Activated T-helper 1 cell treated with anti-CD3 and anti-CD28 coated beads, Interleukin-12 subunit alpha, Interleukin-12 subunit beta, Interleukin-2, Interleukin-4 antibody, amounts not matched to agents 30 ng/mL and 10 ng/mL and 1 ng/mL, durations not matched to agents 14 hours and 24 hours and 36 hours (primary cell): ENCODE measurements at regions of chr15 and their contacts with region 1.

Region 1: DNA sequence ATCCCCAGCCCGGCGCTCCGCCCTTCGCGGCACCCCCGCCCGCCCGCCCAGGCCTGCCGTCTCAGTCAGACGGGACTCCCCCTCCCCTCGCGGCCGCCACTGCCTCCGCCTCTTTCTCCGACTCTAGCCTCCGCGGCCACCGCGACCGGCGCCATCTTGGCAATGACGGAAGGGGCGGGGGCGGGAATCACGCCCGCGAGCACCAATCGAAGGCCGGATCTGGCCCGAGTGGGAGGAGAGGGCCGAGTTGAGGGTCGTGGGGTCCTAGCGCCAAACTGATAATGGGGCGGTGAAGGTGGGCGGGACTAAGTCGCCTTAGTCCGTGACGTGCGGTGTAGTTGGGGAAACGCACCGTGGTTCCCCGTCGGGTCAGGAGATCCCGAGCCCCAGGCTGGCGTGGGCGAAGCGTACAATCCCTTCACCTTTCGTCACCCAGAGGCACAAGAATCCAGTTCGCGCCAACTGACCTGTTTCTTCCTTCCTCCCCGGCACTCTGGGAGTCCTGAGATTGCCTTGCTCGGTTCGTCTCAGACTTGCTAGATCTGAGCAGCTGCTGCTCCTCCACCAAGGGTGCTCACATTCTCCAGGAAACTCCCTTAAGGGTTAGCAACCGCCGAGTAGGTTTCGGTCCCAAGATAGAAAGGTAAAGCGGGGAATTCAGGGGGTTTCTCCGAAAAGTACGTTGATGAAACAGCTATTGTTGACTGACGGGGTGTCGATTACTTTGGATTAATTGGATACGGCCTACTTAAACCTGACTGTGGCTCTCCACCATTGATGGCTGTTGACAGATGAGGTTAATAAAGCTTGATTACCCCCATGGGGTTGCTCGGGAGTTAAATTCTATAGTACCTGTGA is at the start of gene DENND4A:
- DNase-seq: peak; percentile 99
- H3K4me3 Mint-ChIP-seq: peak within 1 kb of the TSS; percentile 91
- H3K27ac Mint-ChIP-seq: peak within 1 kb of the TSS; percentile 99
- H3K4me1 Mint-ChIP-seq: peaks cover 70% of the 10 kb centered on the region
- H3K27me3 Mint-ChIP-seq: no peaks in the 10 kb centered on the region
- total RNA-seq, gene DENND4A: 50.8 and 59.0 TPM in 2 replicates

Region 2: DNA sequence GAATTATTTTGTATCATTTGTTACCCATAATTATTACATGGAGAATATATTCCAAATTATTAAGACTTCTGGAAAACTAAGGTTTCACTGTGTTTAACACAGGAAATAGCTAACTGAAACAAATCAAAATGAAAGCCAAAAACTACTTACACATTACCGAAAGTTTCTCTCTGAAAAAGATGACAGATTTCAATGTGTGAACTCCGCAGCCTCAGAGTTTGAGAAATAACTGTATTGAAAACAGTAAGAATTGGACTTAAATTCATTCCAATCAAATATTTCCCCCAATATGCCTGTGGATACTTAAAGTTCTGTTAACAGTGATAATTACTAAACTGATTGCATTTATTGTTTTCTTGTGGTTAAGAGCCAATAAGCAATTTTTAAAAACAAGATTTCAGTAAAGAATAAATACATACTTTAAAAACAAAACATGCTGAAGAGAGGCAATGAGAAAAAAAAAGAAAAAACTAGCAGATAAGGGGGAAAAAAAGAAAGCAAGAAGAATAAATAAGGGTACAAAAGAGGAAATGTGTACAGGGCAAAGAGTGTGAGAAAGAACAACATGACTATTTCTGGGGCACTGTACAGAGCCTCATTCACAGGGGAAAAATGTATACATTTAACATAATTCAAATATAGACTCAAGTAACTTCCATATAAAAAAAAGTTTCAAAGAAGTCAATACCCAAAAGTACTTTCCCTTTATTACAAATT is 31.0 kb before region 1 on chr15:
- intact Hi-C with region 1: loop called (anchors 1 kb)
- DNase-seq: no peak
- H3K4me3 Mint-ChIP-seq: peak overlapping the region; percentile 57
- H3K27ac Mint-ChIP-seq: peak overlapping the region; percentile 85
- H3K4me1 Mint-ChIP-seq: peaks cover 31% of the 10 kb centered on the region
- H3K27me3 Mint-ChIP-seq: no peaks in the 10 kb centered on the region

Region 3: GRCh38 chr15:65805019-65805745 is 12.8 kb after region 1 on chr15:
- intact Hi-C with region 1: loop called (anchors 1 kb)
- DNase-seq: no peak
- H3K4me3 Mint-ChIP-seq: peak overlapping the region; percentile 31
- H3K27ac Mint-ChIP-seq: peak overlapping the region; percentile 74
- H3K4me1 Mint-ChIP-seq: peaks cover 40% of the 10 kb centered on the region
- H3K27me3 Mint-ChIP-seq: no peaks in the 10 kb centered on the region

Region 4: DNA sequence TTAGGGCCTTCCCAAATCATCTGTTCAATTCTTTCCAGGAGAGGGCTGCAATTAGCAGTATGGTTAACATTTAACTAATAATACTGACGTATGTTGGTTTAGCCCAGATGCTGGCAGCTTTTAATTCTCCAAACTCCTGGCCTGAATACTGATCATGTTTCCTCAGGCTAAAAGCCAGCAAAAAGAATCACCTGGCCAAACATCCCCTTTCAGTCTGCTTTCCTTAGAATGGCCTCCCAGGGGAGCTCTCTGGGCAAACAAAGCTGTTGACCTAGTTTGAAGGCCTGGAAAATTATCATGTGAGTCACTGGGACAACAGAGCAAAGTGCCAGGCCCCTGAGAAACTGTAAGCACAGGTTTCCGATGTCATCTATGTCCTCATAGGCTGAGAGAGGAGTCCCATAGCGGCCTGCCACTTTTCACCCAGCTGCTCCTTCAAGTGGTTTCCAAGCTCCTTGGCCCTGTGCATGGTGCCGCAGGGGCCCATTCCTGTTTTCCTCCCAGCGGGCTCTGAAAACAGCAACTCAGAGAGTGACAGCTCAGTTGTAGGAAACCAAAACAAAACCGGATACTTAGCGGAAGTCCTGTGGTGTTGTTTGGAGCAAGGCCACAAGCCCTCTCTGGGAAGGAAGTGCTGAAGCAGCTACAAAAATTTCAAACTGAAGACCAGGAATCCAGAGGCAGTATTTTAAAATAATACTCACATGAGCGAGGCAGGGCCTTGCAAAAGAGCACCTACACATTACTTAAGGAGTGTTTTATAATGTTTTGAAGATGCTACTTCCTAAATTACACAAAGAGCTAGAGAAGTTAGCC is 40.4 kb after region 1 on chr15:
- intact Hi-C with region 1: loop called (anchors 1 kb)
- DNase-seq: peak; percentile 50
- H3K4me3 Mint-ChIP-seq: peak overlapping the region; percentile 77
- H3K27ac Mint-ChIP-seq: peak overlapping the region; percentile 96
- H3K4me1 Mint-ChIP-seq: peaks cover 54% of the 10 kb centered on the region
- H3K27me3 Mint-ChIP-seq: no peaks in the 10 kb centered on the region

Region 5: DNA sequence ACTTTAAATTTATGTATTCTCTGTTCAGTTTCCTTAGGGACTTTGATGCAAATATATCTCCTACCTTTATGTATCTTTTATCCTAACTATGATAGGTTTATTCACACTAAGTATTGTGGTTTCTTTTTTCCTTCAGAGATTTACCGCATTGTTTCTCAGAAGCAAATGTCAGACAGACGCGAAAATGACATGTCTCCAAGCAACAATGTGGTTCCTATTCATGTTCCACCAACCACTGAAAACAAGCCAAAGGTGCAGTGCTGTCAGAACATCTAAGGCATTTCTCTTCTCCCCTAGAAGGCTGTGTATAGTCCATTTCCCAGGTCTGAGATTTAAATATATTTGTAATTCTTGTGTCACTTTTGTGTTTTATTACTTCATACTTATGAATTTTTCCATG is 95.2 kb after region 1 on chr15:
- intact Hi-C with region 1: loop called (anchors 1 kb)
- DNase-seq: peak; percentile 64
- H3K4me3 Mint-ChIP-seq: peak overlapping the region; percentile 65
- H3K27ac Mint-ChIP-seq: peak overlapping the region; percentile 90
- H3K4me1 Mint-ChIP-seq: peaks cover 86% of the 10 kb centered on the region
- H3K27me3 Mint-ChIP-seq: no peaks in the 10 kb centered on the region

Region 6: DNA sequence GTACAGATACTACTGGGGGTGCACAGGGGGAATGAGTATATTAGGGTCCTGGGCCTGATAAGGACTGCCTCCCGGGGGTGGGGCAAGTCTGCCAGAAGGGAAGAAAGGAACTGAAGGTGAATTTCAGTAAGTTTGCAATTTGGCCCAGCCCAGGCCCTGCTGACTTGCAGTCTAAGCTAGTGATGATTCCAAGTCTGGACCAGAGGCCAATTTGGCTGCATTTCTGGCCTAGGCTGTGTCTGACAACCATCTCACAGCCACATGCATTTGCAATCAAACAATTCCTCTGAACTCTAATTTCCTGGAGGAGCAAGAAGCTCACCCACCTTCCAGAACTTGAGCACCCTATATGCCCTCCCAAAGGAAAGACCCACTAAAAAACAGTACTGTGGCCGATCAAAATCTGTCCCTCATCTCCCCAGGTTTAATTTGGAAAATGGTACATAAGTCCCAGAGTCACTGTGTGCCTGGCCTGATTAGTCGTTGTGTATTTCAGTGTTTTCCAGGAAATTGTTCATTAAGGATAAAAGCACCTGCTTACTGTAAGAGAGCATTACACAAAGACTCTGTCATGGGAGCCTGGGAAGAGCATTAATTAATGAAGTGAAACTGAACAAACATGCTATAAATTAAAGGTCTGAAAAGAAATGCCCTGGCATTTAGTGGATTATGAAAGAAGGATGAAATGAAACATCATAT is 346.7 kb after region 1 on chr15:
- intact Hi-C with region 1: no loop called
- DNase-seq: no peak
- H3K4me3 Mint-ChIP-seq: no peak overlapping the region
- H3K27ac Mint-ChIP-seq: no peak overlapping the region
- H3K4me1 Mint-ChIP-seq: peaks cover 13% of the 10 kb centered on the region
- H3K27me3 Mint-ChIP-seq: peaks cover 2% of the 10 kb centered on the region

Region 7: GRCh38 chr15:66386204-66387123 is 594.1 kb after region 1 on chr15 and contains the start of gene MAP2K1:
- intact Hi-C with region 1: loop called (anchors 5 kb)
- DNase-seq: peak; percentile 98
- H3K4me3 Mint-ChIP-seq: peak within 1 kb of the TSS; percentile 99
- H3K27ac Mint-ChIP-seq: peak within 1 kb of the TSS; percentile 99
- H3K4me1 Mint-ChIP-seq: peaks cover 52% of the 10 kb centered on the region
- H3K27me3 Mint-ChIP-seq: no peaks in the 10 kb centered on the region
- total RNA-seq, gene MAP2K1: 82.5 and 86.6 TPM in 2 replicates